Ovary (tissue), 10 donors: ENCODE measurements at regions of chr3 and their contacts with region 1.

Region 1: DNA sequence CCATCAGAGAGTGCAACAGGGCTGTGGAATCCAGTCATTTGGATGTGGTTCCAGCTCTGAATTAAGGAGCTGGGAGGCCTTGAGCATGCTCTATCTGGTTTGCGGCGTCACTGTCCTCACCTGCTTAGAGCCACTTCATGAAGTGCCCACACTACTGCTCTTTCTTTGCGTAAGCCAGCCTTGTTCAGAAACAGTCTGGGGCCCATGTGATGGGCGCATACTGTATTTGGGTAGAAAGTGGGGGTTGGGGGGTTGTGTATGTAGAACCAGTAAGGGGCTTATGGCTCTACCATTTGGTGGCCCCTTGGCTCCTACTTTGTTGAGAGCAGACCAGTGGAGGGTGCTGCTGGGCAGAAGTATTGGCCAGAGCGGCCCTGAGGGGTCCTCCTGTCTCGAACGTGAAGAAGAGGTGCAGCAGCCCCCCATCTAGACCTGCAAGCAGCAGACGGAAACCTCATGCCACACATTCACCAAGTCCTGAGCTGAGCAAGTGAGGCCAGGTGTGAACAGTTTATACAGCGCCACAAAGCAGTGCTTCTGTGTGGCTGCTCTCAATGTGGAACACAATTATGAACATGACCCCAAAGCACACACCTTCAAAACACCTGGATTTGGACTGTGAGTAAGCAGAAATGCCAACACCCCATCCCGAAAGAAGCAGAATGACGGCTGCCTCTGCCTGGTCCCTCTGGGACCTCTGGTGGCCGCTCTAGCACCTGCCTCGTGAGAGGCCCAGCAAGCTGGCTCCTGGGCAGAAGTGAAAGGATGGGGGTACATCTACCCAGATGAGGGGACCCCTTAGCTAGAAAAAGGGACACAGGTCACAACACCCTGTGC is 26.6 kb downstream of the SRPRB start:
- DNase-seq: no peak
- H3K4me3 ChIP-seq: no peak overlapping the region
- H3K27ac ChIP-seq: no peak overlapping the region
- H3K4me1 ChIP-seq: no peaks in the 10 kb centered on the region
- H3K27me3 ChIP-seq: no peaks in the 10 kb centered on the region
- CTCF ChIP-seq: no peak
- EP300 ChIP-seq: no peak
- POLR2A ChIP-seq: no peak

Region 2: GRCh38 chr3:132867956-132868355 is 964.2 kb before region 1 on chr3:
- intact Hi-C with region 1: loop called in 1 of 4 experiments (anchors 5 kb)
- DNase-seq: no peak
- H3K4me3 ChIP-seq: no peak overlapping the region
- H3K27ac ChIP-seq: no peak overlapping the region
- H3K4me1 ChIP-seq: no peaks in the 10 kb centered on the region
- H3K27me3 ChIP-seq: no peaks in the 10 kb centered on the region
- CTCF ChIP-seq: no peak
- EP300 ChIP-seq: no peak
- POLR2A ChIP-seq: no peak

Region 3: GRCh38 chr3:133843634-133844033 is 11.4 kb after region 1 on chr3:
- intact Hi-C with region 1: no loop called
- DNase-seq: no peak
- H3K4me3 ChIP-seq: no peak overlapping the region
- H3K27ac ChIP-seq: no peak overlapping the region
- H3K4me1 ChIP-seq: no peaks in the 10 kb centered on the region
- H3K27me3 ChIP-seq: no peaks in the 10 kb centered on the region
- CTCF ChIP-seq: no peak
- EP300 ChIP-seq: no peak
- POLR2A ChIP-seq: no peak